IMR-90 (cell line): ENCODE measurements at regions of chr16 and their contacts with region 1.

Region 1: DNA sequence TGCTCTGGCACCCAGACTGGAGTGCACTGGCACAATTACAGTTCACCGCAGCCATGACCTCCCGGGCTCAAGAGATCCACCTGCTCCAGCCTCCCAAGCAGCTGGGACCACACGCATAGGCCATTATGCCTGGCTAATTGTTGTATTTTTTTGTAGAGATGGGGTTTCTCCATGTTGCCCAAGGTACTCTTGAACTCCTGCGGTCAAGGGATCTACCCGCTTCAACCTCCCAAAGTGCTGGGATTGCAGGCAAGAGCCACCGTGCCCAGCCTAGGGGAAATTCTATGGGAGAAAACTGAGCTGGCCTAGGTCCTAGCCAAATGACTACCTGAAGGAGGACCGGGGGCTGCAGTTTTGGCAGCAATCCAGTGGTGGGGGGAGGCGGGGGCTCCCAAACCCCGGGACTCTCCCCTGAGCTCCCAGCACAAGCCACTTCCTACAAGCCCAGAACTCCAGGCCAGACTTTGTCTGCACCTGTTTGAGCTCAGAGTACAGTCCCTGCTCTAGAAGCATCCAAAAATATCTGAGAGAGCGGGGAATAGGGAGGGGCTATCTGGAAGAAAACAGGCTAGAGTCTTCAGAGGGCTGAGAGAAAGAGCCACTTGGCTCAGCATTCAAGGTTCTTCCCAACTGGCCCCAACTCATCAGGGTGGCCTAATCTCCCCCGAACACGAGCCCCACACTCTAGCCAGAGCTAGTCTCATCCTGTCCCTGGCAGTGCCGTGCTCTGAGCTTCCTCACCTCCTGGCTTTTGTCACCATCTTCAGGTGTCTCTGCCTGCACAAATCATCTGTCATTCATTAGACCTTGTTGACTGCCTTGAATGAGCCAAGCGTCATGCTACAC is 9.1 kb downstream of the SRL start:
- DNase-seq: no peak
- ATAC-seq: no peak
- H3K4me3 ChIP-seq: no peak overlapping the region
- H3K27ac ChIP-seq: no peak overlapping the region
- H3K4me1 ChIP-seq: peaks cover 8% of the 10 kb centered on the region; the same call in 1 of the 2 replicates
- H3K27me3 ChIP-seq: no peaks in the 10 kb centered on the region
- CTCF ChIP-seq: no peak
- POLR2A ChIP-seq: no peak
- RAD21 ChIP-seq: no peak

Region 2: GRCh38 chr16:4183237-4184036 is 49.3 kb before region 1 on chr16:
- CTCF ChIA-PET with region 1: interaction called, 3 read pairs
- POLR2A ChIA-PET with region 1: no interaction called
- dilution Hi-C with region 1: no loop called
- in situ Hi-C with region 1: no loop called
- intact Hi-C with region 1: loop called (anchors 1 kb)
- DNase-seq: peak; percentile 92
- ATAC-seq: peak; percentile 98
- H3K4me3 ChIP-seq: peak overlapping the region; percentile 69
- H3K27ac ChIP-seq: peak overlapping the region; percentile 88
- H3K4me1 ChIP-seq: peaks cover 8% of the 10 kb centered on the region
- H3K27me3 ChIP-seq: no peaks in the 10 kb centered on the region
- CTCF ChIP-seq: no peak
- POLR2A ChIP-seq: peak; percentile 50; the same call in 1 of the 2 replicates
- RAD21 ChIP-seq: peak; percentile 16; the same call in 1 of the 2 replicates

Region 3: GRCh38 chr16:4244254-4245076 is 11.7 kb after region 1 on chr16:
- CTCF ChIA-PET with region 1: interaction called, 3 read pairs
- POLR2A ChIA-PET with region 1: interaction called, 12 read pairs
- dilution Hi-C with region 1: no loop called
- in situ Hi-C with region 1: no loop called
- intact Hi-C with region 1: no loop called
- DNase-seq: peak; percentile 10
- ATAC-seq: no peak; the same call in 1 of the 2 replicates
- H3K4me3 ChIP-seq: no peak overlapping the region
- H3K27ac ChIP-seq: no peak overlapping the region
- H3K4me1 ChIP-seq: 0 out of 2 replicates have a peak, but pooled peaks cover 2% of the 10 kb centered on the region
- H3K27me3 ChIP-seq: no peaks in the 10 kb centered on the region; the same call in 1 of the 2 replicates
- CTCF ChIP-seq: no peak
- POLR2A ChIP-seq: no peak
- RAD21 ChIP-seq: no peak

Region 4: DNA sequence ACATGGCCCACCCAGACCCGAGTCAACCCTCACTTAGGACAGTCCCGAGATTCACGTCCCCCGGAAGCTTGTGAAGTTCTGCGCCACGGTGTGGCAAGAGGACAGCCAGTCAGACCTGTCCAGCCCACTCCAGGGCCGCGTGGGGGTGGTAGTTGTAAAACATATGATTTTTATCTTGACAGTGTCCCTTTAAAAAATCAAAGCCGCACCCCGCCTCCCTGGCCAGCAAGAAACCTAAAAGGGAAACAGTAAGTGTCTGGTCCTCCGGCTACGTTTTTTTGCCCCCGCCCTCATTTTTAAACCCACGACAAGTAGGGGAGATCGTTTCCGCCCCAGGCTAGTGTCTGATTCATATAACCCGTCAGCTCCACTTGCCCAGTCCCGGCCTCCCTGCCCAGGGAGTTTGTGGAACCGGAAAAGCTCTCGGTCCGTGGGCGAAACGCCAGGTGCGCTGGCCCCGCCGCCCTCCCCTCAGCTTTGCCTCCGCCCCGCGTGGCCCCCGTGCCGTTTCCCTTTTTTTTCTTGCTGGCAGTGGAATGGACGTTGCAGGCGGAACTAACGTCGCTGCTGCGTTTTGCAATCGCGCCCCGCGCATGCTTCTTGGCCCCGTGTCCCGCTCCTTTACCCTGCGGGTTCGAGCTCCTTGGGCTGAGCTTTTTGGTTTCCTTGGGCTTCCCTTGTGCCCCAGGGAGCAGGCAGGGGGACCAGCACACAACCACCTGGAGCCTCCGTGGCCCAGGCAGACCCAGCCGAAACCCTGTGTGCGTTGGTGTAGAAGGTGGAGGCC is 447.3 kb after region 1 on chr16:
- CTCF ChIA-PET with region 1: no interaction called
- POLR2A ChIA-PET with region 1: no interaction called
- dilution Hi-C with region 1: no loop called
- in situ Hi-C with region 1: no loop called
- intact Hi-C with region 1: no loop called
- DNase-seq: peak; percentile 67
- ATAC-seq: peak; percentile 78
- H3K4me3 ChIP-seq: peak overlapping the region; percentile 18; the same call in 1 of the 2 replicates
- H3K27ac ChIP-seq: peak overlapping the region; percentile 77
- H3K4me1 ChIP-seq: peaks cover 2% of the 10 kb centered on the region; the same call in 1 of the 2 replicates
- H3K27me3 ChIP-seq: no peaks in the 10 kb centered on the region
- CTCF ChIP-seq: no peak
- POLR2A ChIP-seq: no peak
- RAD21 ChIP-seq: no peak